Activated T-helper 2 cell treated with anti-CD3 and anti-CD28 coated beads, Interferon-gamma antibody, Interleukin-2, Interleukin-4, amounts not matched to agents 10 μg/mL and 5 μg/mL and 100 μg/mL, durations not matched to agents 14 hours and 24 hours and 36 hours (primary cell): ENCODE measurements at regions of chr1 and their contacts with region 1.

Region 1: GRCh38 chr1:167401260-167401873 is 117.0 kb downstream of the CD247 start:
- DNase-seq: peak; percentile 33
- H3K4me3 Mint-ChIP-seq: no peak overlapping the region
- H3K27ac Mint-ChIP-seq: no peak overlapping the region
- H3K4me1 Mint-ChIP-seq: peaks cover 1% of the 10 kb centered on the region
- H3K27me3 Mint-ChIP-seq: no peaks in the 10 kb centered on the region

Region 2: GRCh38 chr1:167210966-167211674 is 190.2 kb before region 1 on chr1:
- intact Hi-C with region 1: no loop called
- DNase-seq: no peak
- H3K4me3 Mint-ChIP-seq: no peak overlapping the region
- H3K27ac Mint-ChIP-seq: no peak overlapping the region
- H3K4me1 Mint-ChIP-seq: peaks cover 6% of the 10 kb centered on the region
- H3K27me3 Mint-ChIP-seq: peaks cover 5% of the 10 kb centered on the region

Region 3: DNA sequence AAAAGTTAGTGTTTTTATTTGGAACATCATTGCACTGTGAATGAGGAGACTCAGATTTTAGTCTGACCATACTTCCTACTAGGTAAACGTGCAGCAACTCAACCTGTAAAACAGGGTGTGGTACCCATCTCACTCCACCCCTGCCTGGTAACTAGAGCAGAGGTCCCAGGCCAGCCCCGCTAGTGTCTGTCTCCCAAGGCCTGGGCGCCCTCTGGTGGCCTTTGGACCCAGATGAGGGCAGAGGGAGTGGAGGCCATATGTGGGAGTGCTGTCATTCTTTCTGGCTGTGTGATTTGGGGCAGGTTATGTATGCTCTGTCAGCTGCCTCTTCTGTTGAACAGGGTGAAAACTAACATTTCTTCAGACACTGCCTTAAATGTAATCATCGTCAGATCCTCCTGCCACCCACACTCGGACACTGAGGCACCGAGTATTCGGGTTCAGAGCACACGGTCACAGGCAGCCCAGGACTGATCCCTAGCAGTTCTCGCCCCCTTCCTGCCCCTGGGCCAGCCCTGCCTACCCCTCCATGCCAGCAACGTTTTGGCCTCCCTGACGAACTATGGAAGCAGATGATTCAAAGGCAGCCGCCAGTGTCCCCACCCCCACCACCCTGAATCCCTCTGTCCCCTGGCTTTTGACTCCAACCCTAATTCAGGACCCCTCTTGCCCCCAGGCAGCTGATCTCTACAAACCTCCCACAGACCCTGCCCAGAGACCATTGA is 40.9 kb after region 1 on chr1:
- intact Hi-C with region 1: loop called (anchors 5 kb)
- DNase-seq: peak; percentile 79
- H3K4me3 Mint-ChIP-seq: no peak overlapping the region
- H3K27ac Mint-ChIP-seq: peak overlapping the region; percentile 30
- H3K4me1 Mint-ChIP-seq: peaks cover 65% of the 10 kb centered on the region
- H3K27me3 Mint-ChIP-seq: no peaks in the 10 kb centered on the region

Region 4: DNA sequence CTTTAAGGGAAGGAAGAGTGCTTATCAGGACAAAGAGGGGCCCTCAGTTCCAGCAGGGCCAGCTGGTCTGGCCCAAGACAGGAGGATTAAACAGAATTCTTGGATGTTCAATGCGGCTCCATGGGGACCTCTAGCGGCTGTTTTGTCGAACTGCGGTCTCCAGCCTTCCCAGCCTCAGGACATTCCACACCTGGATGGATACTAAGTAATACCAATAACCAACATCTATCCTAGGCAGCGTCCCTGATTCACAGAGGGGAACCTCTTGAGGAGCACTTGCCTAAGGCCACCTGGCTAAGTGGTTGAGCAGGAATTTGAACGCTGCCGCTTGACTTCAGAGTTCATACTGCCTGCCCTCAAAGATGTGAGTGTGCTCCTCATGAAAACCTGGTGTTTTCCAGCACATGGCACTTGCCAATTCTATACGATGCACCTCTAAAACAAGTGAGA is 132.5 kb after region 1 on chr1:
- intact Hi-C with region 1: loop called (anchors 1 kb)
- DNase-seq: peak; percentile 47
- H3K4me3 Mint-ChIP-seq: no peak overlapping the region
- H3K27ac Mint-ChIP-seq: no peak overlapping the region
- H3K4me1 Mint-ChIP-seq: peaks cover 4% of the 10 kb centered on the region
- H3K27me3 Mint-ChIP-seq: peaks cover 3% of the 10 kb centered on the region